Dorsolateral prefrontal cortex (tissue), 120 donors: ENCODE measurements at regions of chr3 and their contacts with region 1.

Region 1: GRCh38 chr3:49276475-49277382 is at the start of gene C3orf62:
- DNase-seq: peak; percentile 60 to 88 (median 82)
- H3K4me3 ChIP-seq: peak within 1 kb of the TSS; percentile 30 to 72 (median 55)
- H3K27ac ChIP-seq: peak within 1 kb of the TSS; percentile 44 to 98 (median 92)
- H3K27me3 ChIP-seq: no peaks in the 10 kb centered on the region
- CTCF ChIP-seq: peak in 5 of 56 donors; percentile 12 to 32 (median 14)
- total RNA-seq, gene C3orf62: 5.5 to 19.4 (median 10.3) TPM

Region 2: DNA sequence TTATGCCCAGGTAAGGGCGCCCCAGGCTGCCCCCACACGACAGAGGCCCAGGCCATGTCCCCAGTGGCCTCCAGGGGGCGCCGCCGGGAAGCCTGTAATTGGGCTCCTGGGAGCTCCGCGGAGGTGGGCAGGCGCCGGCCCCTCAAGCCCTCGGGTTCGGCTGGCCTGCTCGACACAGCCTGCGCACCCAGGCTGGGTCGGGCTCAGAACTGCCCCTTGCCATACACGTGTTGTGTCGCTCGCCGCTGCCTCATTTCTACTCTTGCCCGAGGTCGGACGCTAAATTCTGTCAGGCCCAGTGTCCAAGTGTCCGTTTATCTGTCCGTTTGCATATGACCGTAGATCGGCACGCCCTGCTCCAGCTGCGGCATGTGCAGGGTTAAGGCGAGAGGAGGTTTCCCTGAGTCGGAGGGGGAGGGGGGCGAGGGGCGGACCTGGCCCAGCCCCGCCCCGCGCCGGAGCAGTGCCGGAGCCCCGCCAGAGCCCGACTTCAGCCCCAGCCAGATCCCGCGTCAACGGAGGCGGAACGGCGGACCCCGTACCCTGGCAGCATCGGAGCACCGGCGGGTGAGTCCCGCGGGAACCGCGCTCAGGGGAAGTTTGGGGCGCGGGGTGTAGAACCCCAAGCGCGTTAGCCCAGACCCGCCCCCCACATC is 105.5 kb before region 1 on chr3 and contains the start of gene KLHDC8B:
- intact Hi-C with region 1: loop called (anchors 5 kb)
- DNase-seq: peak; percentile 58 to 83 (median 76)
- H3K4me3 ChIP-seq: peak within 1 kb of the TSS; percentile 39 to 83 (median 72)
- H3K27ac ChIP-seq: peak within 1 kb of the TSS in 58 of 59 donors; percentile 19 to 90 (median 75)
- H3K27me3 ChIP-seq: peaks cover 0 to 33% (median 0%) of the 10 kb centered on the region in 45 donors
- CTCF ChIP-seq: peak; percentile 63 to 95 (median 82)
- total RNA-seq, gene KLHDC8B: 8.7 to 33.5 (median 21.1) TPM